ENCODE measurements at regions of chr2 and their contacts with region 1.

Region 1: GRCh38 chr2:228048838-228049490 is 132.5 kb downstream of the SPHKAP start:
- DNase-seq: no peak

Region 2: GRCh38 chr2:228657807-228658402 is 608.9 kb after region 1 on chr2:
- intact Hi-C with region 1: loop called (anchors 2 kb)
- DNase-seq: no peak

Region 3: GRCh38 chr2:229205704-229206103 is 1156.7 kb after region 1 on chr2:
- intact Hi-C with region 1: no loop called
- DNase-seq: no peak